ENCODE measurements at regions of chr3 and their contacts with region 1.

Region 1: DNA sequence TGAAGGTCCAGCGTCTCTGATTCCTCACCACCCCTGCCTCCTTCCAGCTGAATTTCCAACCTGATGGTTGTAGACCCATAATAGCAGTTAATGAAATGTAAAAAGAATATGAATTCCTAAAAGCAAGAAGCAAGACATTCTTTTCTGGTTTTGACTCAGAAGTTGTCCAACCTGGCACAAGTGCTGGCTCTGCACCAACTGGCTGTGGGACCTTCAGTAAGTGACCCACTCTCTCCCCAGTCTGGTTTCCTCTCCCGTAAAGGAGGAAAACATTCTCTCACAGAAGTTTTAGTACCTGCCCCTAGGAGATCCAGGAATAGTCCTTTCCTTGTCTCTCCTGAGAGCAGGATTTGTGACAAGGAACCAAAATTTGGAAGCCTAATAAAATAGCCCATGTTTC is 236.9 kb upstream of the TRIM42 start:
- DNase-seq: peak; percentile 74 to 83
- H3K4me3 ChIP-seq: no peak overlapping the region
- H3K27ac ChIP-seq: peak overlapping the region; percentile 66
- H3K4me1 ChIP-seq: peaks cover 22% of the 10 kb centered on the region
- H3K27me3 ChIP-seq: no peaks in the 10 kb centered on the region
- CTCF ChIP-seq: no peak

Region 2: GRCh38 chr3:139774560-139775302 is 666.3 kb before region 1 on chr3:
- CTCF ChIA-PET with region 1: no interaction called
- POLR2A ChIA-PET with region 1: no interaction called
- intact Hi-C with region 1: no loop called
- DNase-seq: no peak
- H3K4me3 ChIP-seq: no peak overlapping the region
- H3K27ac ChIP-seq: no peak overlapping the region
- H3K4me1 ChIP-seq: peaks cover 18% of the 10 kb centered on the region
- H3K27me3 ChIP-seq: peaks cover 5% of the 10 kb centered on the region; the same call in 1 of the 2 replicates
- CTCF ChIP-seq: no peak

Region 3: GRCh38 chr3:140467104-140467577 is 26.1 kb after region 1 on chr3:
- CTCF ChIA-PET with region 1: no interaction called
- POLR2A ChIA-PET with region 1: no interaction called
- intact Hi-C with region 1: loop called (anchors 1 kb)
- DNase-seq: peak; percentile 50 to 93
- H3K4me3 ChIP-seq: no peak overlapping the region
- H3K27ac ChIP-seq: peak overlapping the region; percentile 92
- H3K4me1 ChIP-seq: peaks cover 33% of the 10 kb centered on the region
- H3K27me3 ChIP-seq: no peaks in the 10 kb centered on the region
- CTCF ChIP-seq: no peak

Region 4: DNA sequence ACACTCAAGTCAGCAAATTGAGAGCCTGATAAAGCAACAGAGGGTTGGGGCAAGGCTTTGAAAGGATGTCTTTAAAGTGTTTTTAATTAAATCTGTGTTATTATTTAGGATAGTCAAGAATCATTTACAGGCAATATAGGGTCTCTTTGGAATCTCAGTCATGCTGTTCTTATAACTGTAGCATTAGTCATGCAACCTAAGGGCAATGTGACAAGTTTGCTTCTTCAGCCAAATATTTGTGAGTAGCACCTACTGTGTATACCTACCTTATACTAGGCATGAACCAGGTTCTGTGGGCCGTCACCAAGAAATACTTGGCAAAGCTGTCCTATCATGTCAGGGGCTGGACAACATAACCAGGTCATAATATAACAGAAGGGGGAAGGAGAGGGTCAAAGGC is 52.3 kb after region 1 on chr3:
- CTCF ChIA-PET with region 1: no interaction called
- POLR2A ChIA-PET with region 1: no interaction called
- intact Hi-C with region 1: loop called (anchors 2 kb)
- DNase-seq: peak; percentile 8 to 66
- H3K4me3 ChIP-seq: no peak overlapping the region
- H3K27ac ChIP-seq: no peak overlapping the region
- H3K4me1 ChIP-seq: peaks cover 13% of the 10 kb centered on the region
- H3K27me3 ChIP-seq: no peaks in the 10 kb centered on the region
- CTCF ChIP-seq: no peak

Region 5: GRCh38 chr3:140629357-140630139 is 188.5 kb after region 1 on chr3:
- CTCF ChIA-PET with region 1: no interaction called
- POLR2A ChIA-PET with region 1: no interaction called
- intact Hi-C with region 1: loop called (anchors 2 kb)
- DNase-seq: peak; percentile 56 to 92
- H3K4me3 ChIP-seq: no peak overlapping the region
- H3K27ac ChIP-seq: peak overlapping the region; percentile 72
- H3K4me1 ChIP-seq: peaks cover 30% of the 10 kb centered on the region
- H3K27me3 ChIP-seq: no peaks in the 10 kb centered on the region
- CTCF ChIP-seq: no peak

Measured in PC-9 (cell line).